A549 (cell line): ENCODE measurements at regions of chr17 and their contacts with region 1.

Region 1: DNA sequence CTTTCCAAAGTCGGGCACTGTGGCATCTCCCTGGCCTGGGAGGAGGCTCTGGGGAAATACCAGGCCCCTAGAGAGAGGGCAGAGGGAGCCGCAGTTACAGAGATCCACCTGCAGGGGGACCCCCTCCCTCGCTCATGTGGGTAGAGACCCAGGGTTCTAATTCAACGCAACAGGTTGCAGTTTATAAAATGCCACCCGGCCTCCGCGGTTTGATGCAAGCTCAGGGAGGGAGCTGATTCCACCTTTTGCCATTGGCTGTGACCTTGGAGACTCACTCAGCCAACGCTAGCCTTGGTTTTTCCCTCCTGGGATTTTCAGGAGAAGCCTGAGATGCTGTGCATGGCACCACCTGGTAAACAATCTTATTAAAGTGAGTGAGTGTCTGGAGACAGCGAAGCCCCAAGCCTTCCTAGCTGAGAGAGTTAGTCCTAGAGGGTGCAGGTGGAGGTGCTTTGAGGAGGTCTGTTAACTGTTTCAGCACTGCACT is 12.1 kb downstream of the TTLL6 start:
- DNase-seq: peak; percentile 78 to 96
- ATAC-seq: peak; percentile 95
- H3K4me3 ChIP-seq: no peak overlapping the region
- H3K27ac ChIP-seq: peak overlapping the region; percentile 53 to 73
- H3K4me1 ChIP-seq: peaks cover 56% of the 10 kb centered on the region
- CTCF ChIP-seq: peak; percentile 97
- EP300 ChIP-seq: no peak
- POLR2A ChIP-seq: no peak
- RAD21 ChIP-seq: peak; percentile 99

Region 2: GRCh38 chr17:48472411-48473281 is 332.3 kb before region 1 on chr17:
- CTCF ChIA-PET with region 1: no interaction called
- POLR2A ChIA-PET with region 1: no interaction called
- DNase-seq: peak in 1 of 2 experiments; percentile 32
- ATAC-seq: peak; percentile 38 to 48; a peak in 4 of 6 replicates
- H3K4me3 ChIP-seq: no peak overlapping the region
- H3K27ac ChIP-seq: 0 out of 6 replicates have a peak overlapping the region, but pooled peaks of 1 of the 2 experiments have one; percentile 12
- H3K4me1 ChIP-seq: peaks cover 6% of the 10 kb centered on the region; the same call in 2 of the 3 replicates
- CTCF ChIP-seq: no peak
- EP300 ChIP-seq: no peak
- POLR2A ChIP-seq: no peak
- RAD21 ChIP-seq: no peak

Region 3: DNA sequence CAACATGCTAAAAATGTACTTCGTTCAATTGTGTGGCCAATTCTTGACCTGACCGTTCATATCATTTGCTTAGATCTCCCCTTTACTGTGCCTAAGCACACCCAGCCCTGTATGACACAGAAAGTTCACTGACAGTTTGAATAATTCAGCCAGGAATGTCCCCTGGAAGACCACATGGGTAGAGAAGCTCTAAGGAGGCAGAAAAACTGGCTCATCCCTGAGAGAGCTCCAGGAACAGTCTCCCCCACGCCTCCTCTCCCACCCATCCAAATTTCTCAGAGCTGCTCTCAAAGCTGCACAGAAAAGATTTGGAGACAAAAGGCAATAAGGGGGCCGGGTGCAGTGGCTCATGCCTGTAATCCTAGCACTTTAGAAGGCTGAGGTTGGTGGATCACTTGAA is 93.9 kb before region 1 on chr17:
- CTCF ChIA-PET with region 1: interaction called, 852 read pairs
- POLR2A ChIA-PET with region 1: no interaction called
- DNase-seq: no peak
- ATAC-seq: peak in 1 of 2 experiments; percentile 39; a peak in 2 of 6 replicates
- H3K4me3 ChIP-seq: no peak overlapping the region
- H3K27ac ChIP-seq: no peak overlapping the region
- H3K4me1 ChIP-seq: peaks cover 13% of the 10 kb centered on the region; the same call in 2 of the 3 replicates
- CTCF ChIP-seq: no peak
- EP300 ChIP-seq: no peak
- POLR2A ChIP-seq: no peak
- RAD21 ChIP-seq: no peak

Region 4: GRCh38 chr17:48816774-48817590 is 12.0 kb after region 1 on chr17 and contains the start of gene TTLL6:
- CTCF ChIA-PET with region 1: interaction called, 3,251 read pairs
- POLR2A ChIA-PET with region 1: no interaction called
- DNase-seq: peak; percentile 90 to 97
- ATAC-seq: peak; percentile 95 to 97
- H3K4me3 ChIP-seq: peak within 1 kb of the TSS; percentile 54
- H3K27ac ChIP-seq: peak within 1 kb of the TSS; percentile 56 to 76
- H3K4me1 ChIP-seq: peaks cover 23% of the 10 kb centered on the region; the same call in 2 of the 3 replicates
- CTCF ChIP-seq: no peak
- EP300 ChIP-seq: no peak
- POLR2A ChIP-seq: no peak; the same call in 1 of the 2 replicates
- RAD21 ChIP-seq: no peak
- polyA plus RNA-seq, gene TTLL6: 7.8 and 8.9 TPM in 2 replicates

Region 5: DNA sequence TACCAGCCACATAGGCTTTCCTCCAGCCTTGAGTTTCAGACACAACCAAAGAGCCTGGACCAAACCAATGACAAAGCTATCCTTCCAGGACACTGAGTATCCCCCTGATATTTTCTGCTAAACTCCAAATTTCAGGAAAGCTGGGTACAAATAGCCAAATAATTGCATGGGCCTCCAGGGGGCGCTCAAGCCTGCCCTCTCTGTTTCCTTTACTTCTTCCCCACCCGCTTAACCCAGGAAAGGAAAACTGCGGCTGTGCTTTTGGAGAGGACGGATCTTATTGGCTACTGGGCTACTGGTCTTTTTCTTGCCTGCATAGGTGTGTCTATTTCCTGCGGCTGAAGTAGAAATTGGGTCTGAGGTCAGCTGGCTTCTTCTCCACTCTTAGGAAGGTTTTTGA is 375.3 kb after region 1 on chr17:
- CTCF ChIA-PET with region 1: no interaction called
- POLR2A ChIA-PET with region 1: no interaction called
- DNase-seq: peak; percentile 69 to 79
- ATAC-seq: peak; percentile 62 to 87
- H3K4me3 ChIP-seq: no peak overlapping the region
- H3K27ac ChIP-seq: no peak overlapping the region
- H3K4me1 ChIP-seq: no peaks in the 10 kb centered on the region
- CTCF ChIP-seq: peak; percentile 85
- EP300 ChIP-seq: no peak
- POLR2A ChIP-seq: no peak
- RAD21 ChIP-seq: peak; percentile 72 to 75